CD4-positive, alpha-beta T cell (primary cell): ENCODE measurements at regions of chr14 and their contacts with region 1.

Region 1: GRCh38 chr14:21455911-21456667 is at the start of gene CHD8:
- DNase-seq: peak; percentile 97 to 100 (median 99)
- ATAC-seq: peak; percentile 96
- H3K4me3 ChIP-seq: peak within 1 kb of the TSS; percentile 91
- H3K4me3 Mint-ChIP-seq: peak within 1 kb of the TSS; percentile 95
- H3K27ac ChIP-seq: peak within 1 kb of the TSS; percentile 88 to 95
- H3K27ac Mint-ChIP-seq: peak within 1 kb of the TSS; percentile 100
- H3K4me1 ChIP-seq: peaks cover 45% of the 10 kb centered on the region
- H3K4me1 Mint-ChIP-seq: peaks cover 46% of the 10 kb centered on the region
- H3K27me3 ChIP-seq: no peaks in the 10 kb centered on the region
- H3K27me3 Mint-ChIP-seq: no peaks in the 10 kb centered on the region
- CTCF ChIP-seq: peak; percentile 71
- total RNA-seq, gene CHD8: 119 to 128 TPM

Region 2: GRCh38 chr14:20454516-20455354 is 1001.4 kb before region 1 on chr14 and contains the starts of genes APEX1 and OSGEP:
- CTCF ChIA-PET with region 1: no interaction called
- POLR2A ChIA-PET with region 1: no interaction called
- intact Hi-C with region 1: loop called in 1 of 2 experiments (anchors 5 kb)
- DNase-seq: peak; percentile 94 to 100 (median 97)
- ATAC-seq: peak; percentile 77
- H3K4me3 ChIP-seq: peak within 1 kb of the TSS; percentile 66
- H3K4me3 Mint-ChIP-seq: no peak within 1 kb of the TSS
- H3K27ac ChIP-seq: peak within 1 kb of the TSS; percentile 92 to 97
- H3K27ac Mint-ChIP-seq: no peak within 1 kb of the TSS
- H3K4me1 ChIP-seq: peaks cover 37% of the 10 kb centered on the region
- H3K4me1 Mint-ChIP-seq: peaks cover 6% of the 10 kb centered on the region
- H3K27me3 ChIP-seq: no peaks in the 10 kb centered on the region
- H3K27me3 Mint-ChIP-seq: no peaks in the 10 kb centered on the region
- CTCF ChIP-seq: no peak
- total RNA-seq, gene APEX1: 125 to 127 TPM
- total RNA-seq, gene OSGEP: 49.2 to 52.9 TPM

Region 3: DNA sequence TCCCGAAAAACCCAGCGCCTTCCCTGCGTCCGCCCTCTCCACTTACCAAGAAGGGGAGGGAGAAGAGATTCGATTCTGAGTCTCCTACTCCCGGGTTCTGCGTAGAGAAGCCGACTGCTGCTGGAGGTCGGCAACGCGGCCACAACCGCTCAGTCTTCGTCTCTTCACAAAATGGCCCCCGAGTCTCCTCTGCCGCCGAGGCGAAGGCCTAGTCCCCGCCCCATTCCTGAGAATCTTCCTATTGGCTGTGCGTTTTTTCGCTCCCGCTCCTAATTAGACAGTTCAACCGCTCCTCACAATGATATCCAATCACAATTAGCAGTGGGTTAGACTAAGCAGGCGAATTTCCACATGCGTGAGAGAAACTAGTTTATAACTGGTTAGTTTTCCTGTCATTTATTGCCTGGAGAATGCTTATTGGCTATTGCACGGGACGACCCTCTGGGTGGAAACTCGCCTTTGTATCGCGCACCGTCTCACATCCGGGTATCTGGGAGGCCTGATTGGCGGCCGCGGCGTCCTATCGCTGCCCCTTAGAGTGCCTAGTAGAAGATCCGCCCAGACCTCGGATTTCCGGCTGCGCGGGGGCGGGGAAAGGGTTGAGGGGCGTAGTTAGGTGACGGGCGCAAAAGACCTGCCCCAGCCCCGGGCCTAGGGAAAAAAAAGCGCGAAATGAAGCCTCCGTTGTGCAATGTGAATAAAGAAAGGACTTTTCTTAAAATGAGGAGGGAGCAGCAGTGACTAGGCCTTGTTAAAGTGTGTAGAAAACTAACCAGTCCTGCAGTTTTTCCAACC is 186.6 kb before region 1 on chr14 and contains the start of gene HNRNPC:
- CTCF ChIA-PET with region 1: no interaction called
- POLR2A ChIA-PET with region 1: interaction called, 4 read pairs
- intact Hi-C with region 1: loop called in 1 of 2 experiments (anchors 1 kb)
- DNase-seq: peak; percentile 100
- ATAC-seq: peak; percentile 86
- H3K4me3 ChIP-seq: peak within 1 kb of the TSS; percentile 83
- H3K4me3 Mint-ChIP-seq: peak within 1 kb of the TSS; percentile 94
- H3K27ac ChIP-seq: peak within 1 kb of the TSS; percentile 95 to 97
- H3K27ac Mint-ChIP-seq: peak within 1 kb of the TSS; percentile 95
- H3K4me1 ChIP-seq: peaks cover 29% of the 10 kb centered on the region
- H3K4me1 Mint-ChIP-seq: peaks cover 45% of the 10 kb centered on the region
- H3K27me3 ChIP-seq: no peaks in the 10 kb centered on the region
- H3K27me3 Mint-ChIP-seq: no peaks in the 10 kb centered on the region
- CTCF ChIP-seq: no peak
- total RNA-seq, gene HNRNPC: 507 to 528 TPM

Region 4: DNA sequence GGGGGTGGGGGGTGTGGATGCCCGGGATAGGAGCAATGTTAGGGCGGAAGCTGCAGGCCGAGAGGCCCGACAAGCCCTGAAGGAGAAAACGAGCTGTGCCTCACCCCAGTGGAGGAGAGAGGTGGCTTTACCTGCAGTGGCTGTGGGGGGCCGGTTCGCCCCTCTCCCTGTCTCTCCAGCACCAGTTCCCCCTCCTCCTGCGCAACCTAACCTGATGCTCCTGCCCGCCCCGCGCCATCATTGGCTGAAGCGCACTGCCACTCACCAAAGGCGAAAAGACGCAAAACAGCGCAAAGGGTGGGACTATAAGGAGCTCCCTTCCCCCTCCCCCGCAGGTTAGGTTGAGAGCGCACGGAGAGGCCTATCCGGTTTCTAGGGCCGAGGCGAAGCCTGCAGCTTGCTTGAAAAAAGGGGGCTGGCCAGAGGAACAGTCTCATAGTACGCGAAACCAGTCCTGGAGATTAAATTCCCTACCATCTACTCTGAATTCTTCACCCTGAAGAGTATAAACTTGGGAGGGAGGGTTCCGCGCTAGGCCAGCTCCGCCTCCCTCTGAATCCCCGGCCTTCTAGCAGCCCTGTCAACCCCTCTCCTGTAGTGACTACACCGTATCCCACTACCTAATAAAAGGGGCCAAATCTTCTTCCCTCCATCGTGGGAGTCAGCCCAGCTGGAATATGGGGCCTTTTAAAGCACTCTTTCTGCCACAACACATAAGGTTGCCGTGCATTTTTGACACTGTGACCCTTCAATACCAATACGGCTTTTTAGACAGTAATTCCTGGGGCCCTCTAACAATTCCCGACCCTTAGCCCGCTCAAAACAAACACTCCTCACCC is 18.8 kb before region 1 on chr14:
- CTCF ChIA-PET with region 1: interaction called, 39 read pairs
- POLR2A ChIA-PET with region 1: interaction called, 247 read pairs
- intact Hi-C with region 1: loop called (anchors 1 kb)
- DNase-seq: peak; percentile 97 to 100 (median 99)
- ATAC-seq: peak; percentile 98
- H3K4me3 ChIP-seq: peak overlapping the region; percentile 84
- H3K4me3 Mint-ChIP-seq: peak overlapping the region; percentile 98
- H3K27ac ChIP-seq: peak overlapping the region; percentile 78 to 81
- H3K27ac Mint-ChIP-seq: peak overlapping the region; percentile 96
- H3K4me1 ChIP-seq: peaks cover 14% of the 10 kb centered on the region
- H3K4me1 Mint-ChIP-seq: peaks cover 81% of the 10 kb centered on the region
- H3K27me3 ChIP-seq: no peaks in the 10 kb centered on the region
- H3K27me3 Mint-ChIP-seq: no peaks in the 10 kb centered on the region
- CTCF ChIP-seq: no peak

Region 5: DNA sequence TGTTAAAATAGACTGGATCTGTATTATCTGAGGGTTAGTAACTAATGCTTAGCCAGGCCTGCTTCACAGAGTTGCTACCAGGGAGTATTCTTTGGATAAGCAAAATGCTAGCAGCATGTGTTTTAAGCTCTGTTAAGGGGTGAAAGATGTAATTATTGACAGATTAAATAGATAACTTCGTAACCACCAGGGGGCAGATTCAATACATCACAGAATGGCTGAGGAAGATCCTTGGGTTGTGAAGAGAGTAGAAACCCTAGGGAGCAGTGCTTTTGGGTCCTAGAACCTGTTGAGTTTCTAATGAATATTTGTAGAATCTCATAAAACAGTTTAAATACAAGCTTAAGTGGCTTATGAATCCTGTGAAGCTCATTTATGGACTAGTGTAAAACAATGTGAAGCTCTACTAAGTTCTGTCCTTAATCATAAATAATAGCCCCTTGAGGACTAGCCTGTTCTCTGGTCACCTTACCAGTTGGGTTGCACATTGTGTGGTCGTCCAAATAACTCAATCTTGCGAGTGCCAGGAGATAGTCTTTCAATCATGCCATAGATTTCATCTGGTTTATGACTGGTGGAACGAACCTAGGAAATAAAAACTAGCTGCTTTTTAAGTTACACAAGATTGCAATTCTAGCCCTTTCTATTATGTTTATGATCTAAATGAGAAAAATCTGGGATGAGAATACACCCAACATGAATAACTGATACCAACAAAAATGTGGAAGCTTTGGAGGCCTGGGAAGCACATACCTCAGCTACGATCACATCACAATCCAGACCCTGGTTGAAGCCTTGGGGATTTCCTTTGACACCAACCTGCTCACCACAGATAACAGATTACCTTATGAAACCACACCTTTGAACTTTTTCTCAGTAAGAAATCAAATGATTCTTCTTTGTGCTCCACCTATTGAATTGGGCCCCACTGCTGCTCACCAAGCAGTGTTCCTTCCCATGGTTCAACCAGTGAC is 42.8 kb after region 1 on chr14:
- CTCF ChIA-PET with region 1: interaction called, 20 read pairs
- POLR2A ChIA-PET with region 1: interaction called, 6 read pairs
- intact Hi-C with region 1: no loop called
- DNase-seq: peak in 5 of 14 experiments; percentile 14 to 81 (median 65)
- ATAC-seq: peak; percentile 77
- H3K4me3 ChIP-seq: no peak overlapping the region
- H3K4me3 Mint-ChIP-seq: no peak overlapping the region
- H3K27ac ChIP-seq: peak overlapping the region in 1 of 2 donors; percentile 4
- H3K27ac Mint-ChIP-seq: peak overlapping the region; percentile 73
- H3K4me1 ChIP-seq: peaks cover 7% of the 10 kb centered on the region
- H3K4me1 Mint-ChIP-seq: peaks cover 30% of the 10 kb centered on the region
- H3K27me3 ChIP-seq: no peaks in the 10 kb centered on the region
- H3K27me3 Mint-ChIP-seq: no peaks in the 10 kb centered on the region
- CTCF ChIP-seq: peak; percentile 69

Region 6: DNA sequence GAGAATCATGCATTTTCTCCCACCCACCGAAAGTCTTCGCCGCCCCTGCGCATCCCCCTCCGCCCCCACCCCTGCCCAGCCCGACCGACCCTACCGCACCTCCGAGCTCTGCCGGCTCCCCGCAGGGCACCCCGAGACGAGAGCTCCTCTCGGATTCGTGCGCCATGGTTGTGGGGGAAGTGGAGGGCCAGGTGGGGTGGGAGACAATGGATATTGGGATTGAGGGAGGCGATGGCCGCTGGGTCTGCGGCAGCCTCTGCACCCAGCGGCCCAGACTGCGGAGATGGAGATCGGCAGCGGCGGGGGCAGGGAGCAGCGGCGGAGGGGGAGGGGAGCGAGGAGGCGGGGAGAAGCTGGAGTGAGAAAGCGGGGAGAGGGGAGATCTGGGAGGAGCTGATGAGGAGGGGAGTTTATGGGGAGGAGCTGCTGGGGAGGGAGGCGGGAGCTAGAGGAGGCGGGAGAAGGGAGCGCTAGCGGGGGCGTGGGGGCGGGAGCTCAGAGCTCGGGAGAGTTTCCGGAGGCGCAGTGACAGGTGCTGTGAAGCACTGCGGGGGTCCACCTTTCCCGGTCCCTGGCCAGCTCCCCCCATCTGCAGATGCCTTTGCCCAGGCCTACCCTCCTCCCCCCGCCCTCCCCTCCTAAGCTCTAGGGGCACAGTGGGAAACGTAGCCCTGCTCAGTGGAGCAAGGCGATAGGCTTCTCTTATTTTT is 70.0 kb after region 1 on chr14 and contains the start of gene SALL2:
- CTCF ChIA-PET with region 1: interaction called, 5 read pairs
- POLR2A ChIA-PET with region 1: interaction called, 16 read pairs
- intact Hi-C with region 1: no loop called
- DNase-seq: peak; percentile 18 to 85 (median 61)
- ATAC-seq: peak; percentile 88
- H3K4me3 ChIP-seq: peak within 1 kb of the TSS; percentile 74
- H3K4me3 Mint-ChIP-seq: peak within 1 kb of the TSS; percentile 96
- H3K27ac ChIP-seq: peak within 1 kb of the TSS in 1 of 2 donors; percentile 7
- H3K27ac Mint-ChIP-seq: peak within 1 kb of the TSS; percentile 55
- H3K4me1 ChIP-seq: peaks cover 13% of the 10 kb centered on the region
- H3K4me1 Mint-ChIP-seq: peaks cover 22% of the 10 kb centered on the region
- H3K27me3 ChIP-seq: no peaks in the 10 kb centered on the region
- H3K27me3 Mint-ChIP-seq: no peaks in the 10 kb centered on the region
- CTCF ChIP-seq: no peak
- total RNA-seq, gene SALL2: 2.8 to 2.9 TPM

Region 7: DNA sequence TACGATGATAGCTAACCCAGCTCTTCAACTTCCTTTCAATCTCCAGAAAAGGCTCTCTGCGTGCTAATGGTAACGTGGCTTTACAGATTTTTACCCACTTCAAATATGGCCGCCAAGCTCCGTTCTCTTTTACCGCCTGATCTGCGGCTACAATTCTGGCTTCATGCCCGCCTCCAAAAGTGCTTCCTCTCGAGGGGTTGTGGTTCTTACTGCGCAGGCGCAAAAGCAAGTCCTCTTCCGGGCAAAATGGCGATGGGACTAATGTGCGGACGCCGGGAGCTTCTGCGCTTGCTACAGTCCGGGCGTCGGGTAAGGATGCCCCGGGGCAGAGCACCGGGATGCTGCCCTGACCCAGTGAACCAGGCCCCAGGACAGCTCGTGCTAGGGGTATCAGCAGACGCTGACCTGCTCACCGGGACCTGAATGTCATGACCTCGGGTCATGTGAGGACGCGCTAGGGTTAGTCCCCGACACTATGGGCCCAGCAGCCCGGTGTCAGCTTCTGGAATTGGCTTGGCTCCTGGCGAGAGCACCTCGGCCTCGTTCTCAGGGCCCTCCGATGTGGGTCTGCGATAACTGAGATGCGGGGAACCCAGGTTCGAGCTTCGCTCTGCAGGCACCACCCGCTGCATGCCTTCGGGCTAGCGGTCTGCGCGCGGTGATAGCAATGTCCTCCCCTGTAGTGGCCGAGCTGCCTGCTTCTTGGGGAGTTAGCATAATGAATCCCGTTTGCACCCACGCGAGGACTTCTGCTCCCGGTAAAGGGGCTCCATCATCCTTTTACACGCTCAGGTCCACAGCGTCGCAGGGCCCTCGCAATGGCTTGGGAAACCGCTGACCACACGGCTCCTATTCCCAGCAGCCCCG is 1310.6 kb after region 1 on chr14 and contains the start of gene OXA1L:
- CTCF ChIA-PET with region 1: no interaction called
- POLR2A ChIA-PET with region 1: interaction called, 3 read pairs
- intact Hi-C with region 1: loop called in 1 of 2 experiments (anchors 10 kb)
- DNase-seq: peak; percentile 86 to 99 (median 96)
- ATAC-seq: peak; percentile 94
- H3K4me3 ChIP-seq: peak within 1 kb of the TSS; percentile 87
- H3K4me3 Mint-ChIP-seq: peak within 1 kb of the TSS; percentile 85
- H3K27ac ChIP-seq: peak within 1 kb of the TSS; percentile 80
- H3K27ac Mint-ChIP-seq: peak within 1 kb of the TSS; percentile 88
- H3K4me1 ChIP-seq: peaks cover 23% of the 10 kb centered on the region
- H3K4me1 Mint-ChIP-seq: peaks cover 33% of the 10 kb centered on the region
- H3K27me3 ChIP-seq: no peaks in the 10 kb centered on the region
- H3K27me3 Mint-ChIP-seq: no peaks in the 10 kb centered on the region
- CTCF ChIP-seq: no peak
- total RNA-seq, gene OXA1L: 176 to 177 TPM